ENCODE measurements at regions of chr3 and their contacts with region 1.

Region 1: DNA sequence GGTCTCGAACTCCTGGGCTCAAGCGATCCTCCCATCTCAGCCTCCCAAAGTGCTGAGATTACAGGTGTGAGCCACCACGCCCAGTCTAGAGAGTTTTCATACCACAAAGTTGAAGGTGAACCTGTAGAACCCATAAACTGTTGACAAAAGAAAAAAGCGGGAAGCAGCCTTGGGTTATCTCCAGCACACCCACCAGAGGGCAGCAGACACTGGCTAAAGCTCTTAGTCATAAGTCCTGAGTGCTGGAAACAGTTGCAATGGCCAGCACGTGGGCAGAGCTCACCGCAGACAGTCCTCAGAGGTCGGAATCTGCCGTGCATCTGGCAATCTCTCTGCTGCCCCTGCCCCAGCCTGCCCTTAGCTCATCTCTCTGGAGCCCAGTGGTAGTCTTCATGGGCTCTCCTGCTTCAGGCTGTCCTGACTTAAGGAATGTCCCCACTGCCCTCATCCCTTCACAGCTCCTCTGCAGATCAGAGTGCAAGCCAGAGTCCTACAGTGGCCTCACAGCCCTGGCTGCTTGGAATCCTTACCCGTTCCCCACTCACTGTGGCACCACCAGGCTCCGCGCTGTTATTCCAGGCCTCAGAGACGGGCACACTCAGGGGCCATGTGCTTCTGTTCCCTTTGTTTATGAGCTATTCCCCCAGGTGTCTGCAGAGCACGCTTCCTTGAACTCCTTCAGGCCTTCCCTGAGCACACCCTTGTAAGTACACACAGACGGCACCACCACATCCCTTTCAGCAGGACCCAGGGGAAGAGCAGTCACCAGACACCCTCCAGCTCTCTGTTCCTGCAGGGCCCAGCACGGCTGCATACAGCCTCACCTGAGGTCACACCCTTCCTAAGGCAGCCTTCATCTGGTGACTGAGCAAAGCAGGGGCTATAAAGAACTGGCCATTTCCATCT is 8.8 kb upstream of the ELP6 start:
- DNase-seq: peak; percentile 89

Region 2: DNA sequence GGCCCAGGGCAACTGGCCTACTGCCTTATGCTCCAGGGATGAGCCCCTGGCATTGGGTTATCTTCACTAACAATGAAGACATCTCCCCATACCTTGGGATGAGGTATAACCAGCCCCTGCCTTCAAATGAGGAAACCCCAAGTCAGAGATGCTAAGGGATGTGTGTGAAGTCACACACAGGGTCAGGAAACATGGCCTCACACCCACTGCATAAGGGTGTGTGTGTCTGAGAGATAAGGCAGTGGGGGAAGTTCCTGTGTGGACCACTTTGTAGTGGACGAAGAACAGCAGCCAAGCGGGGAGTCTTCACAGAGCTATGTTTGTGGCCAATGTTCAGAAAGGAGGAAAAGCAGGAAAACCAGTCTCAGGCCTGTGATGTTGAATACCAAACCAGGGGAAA is 19.3 kb before region 1 on chr3:
- intact Hi-C with region 1: no loop called
- DNase-seq: no peak

Region 3: DNA sequence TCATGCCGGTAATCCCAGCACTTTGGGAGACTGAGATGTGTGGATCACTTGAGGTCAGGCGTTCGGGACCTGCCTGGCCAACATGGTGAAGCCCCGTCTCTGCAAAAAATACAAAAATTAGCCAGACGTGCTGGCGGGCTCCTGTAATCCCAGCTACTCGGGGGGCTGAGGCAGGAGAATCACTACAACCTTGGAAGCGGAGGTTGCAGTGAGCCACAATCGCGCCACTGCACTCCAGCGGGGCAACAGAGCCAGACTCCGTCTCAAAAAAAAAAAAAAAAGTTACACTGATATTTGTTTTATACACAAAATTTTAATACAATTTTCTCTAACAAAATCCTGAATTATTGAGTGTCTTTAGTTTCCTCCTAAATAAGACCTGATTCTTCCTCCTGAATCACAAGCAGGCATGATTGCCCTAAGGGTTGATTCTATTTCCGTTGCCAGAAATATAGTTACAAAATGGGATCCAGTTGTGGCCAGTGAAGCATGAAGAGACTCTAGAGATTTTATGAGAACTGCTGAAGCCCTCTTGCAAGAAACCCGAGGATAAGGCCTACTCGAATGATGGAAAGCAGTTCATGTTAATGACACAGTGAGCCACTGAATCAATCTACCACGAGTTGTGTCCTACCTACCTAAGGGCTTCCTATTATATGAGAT is 269.0 kb after region 1 on chr3:
- intact Hi-C with region 1: loop called (anchors 1 kb)
- DNase-seq: no peak